Panc1 (cell line): ENCODE measurements at regions of chr1 and their contacts with region 1.

Region 1: DNA sequence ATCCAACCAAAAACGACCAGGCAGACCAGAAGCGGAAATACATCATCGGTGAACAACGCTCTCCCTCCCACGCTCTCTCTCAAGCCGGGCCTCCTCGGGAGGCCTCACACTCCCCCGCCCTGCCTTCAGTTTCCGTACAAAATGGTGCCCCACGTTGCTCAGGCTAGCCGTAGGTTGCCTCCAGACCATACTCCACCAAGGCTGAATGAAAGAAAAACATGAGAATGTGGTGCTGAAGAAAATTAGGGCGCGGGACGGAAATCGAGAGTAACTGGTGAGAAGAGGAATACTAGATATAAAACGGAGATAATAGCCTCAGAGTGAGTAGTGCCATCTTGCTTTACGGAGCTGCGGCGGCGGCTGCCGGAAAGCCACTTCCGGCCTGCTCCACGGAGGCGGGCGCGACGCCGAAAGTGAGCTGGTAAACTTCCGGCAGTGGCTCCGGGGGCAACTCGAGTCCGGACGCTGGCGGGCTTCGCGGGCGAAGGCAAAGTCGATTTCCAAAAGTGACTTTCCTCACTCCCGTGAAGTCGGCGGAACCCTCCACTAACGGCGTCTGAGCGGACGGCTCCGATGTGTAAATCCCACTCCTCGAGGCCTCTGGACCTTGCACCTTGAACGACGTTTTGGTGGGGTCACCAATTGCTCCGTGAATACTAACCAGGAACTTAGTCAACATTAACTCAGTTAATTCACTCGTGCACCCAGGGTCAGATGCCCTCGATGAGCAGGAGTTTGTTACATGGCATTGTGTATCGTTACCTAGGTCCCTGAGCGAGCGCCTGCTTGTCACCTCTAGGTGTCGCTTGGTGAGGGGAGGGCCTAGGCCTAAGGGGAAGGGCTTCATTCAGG is at the start of gene SH3BP5L:
- DNase-seq: peak; percentile 89
- ATAC-seq: peak; percentile 95
- H3K4me3 ChIP-seq: peak within 1 kb of the TSS; percentile 85 to 87
- H3K27ac ChIP-seq: peak within 1 kb of the TSS; percentile 99
- H3K4me1 ChIP-seq: peaks cover 15% of the 10 kb centered on the region
- H3K27me3 ChIP-seq: no peaks in the 10 kb centered on the region
- CTCF ChIP-seq: peak; percentile 90
- total RNA-seq, gene SH3BP5L: 23.9 TPM

Region 2: DNA sequence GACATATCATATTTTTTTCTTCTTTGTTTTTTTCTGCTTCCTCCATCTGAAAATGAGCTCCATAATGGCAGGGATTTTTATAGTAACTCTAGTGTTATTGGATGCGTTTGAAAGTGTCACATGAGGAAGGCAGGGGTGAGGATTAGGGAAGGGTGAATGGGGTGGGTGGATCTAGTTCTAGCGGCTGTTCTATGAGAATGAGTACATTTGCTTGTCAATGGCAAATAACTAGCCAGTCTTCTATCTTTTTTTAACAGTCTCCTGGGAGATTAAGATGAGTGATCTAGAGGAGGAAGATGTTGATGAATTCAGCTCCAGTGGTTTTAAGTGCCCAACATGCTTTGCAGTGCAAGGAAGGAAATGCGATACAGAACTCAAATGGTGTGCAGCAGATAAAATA is 129.4 kb before region 1 on chr1:
- CTCF ChIA-PET with region 1: interaction called, 18 read pairs
- POLR2A ChIA-PET with region 1: no interaction called
- in situ Hi-C with region 1: no loop called
- intact Hi-C with region 1: no loop called
- DNase-seq: no peak
- ATAC-seq: no peak
- H3K4me3 ChIP-seq: no peak overlapping the region
- H3K27ac ChIP-seq: no peak overlapping the region
- H3K4me1 ChIP-seq: no peaks in the 10 kb centered on the region
- H3K27me3 ChIP-seq: no peaks in the 10 kb centered on the region
- CTCF ChIP-seq: no peak

Region 3: DNA sequence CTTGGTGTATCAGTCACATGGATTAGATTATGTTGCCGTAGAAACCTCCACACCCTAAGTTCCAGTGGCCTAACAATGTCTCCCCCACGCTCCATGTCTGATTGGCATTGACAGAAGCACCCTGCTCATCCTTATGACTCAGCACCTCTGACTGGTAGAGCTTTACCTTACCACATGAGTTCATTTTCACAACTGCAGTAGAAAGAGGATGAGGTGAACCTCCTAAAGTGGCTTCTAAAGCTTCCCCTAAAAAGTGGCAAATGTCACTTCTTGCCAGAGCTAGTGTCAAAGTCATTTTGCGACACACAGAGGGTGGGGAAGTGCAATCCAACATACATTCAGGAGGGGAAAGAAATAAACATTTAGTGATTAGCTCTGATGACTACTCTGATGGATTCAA is 40.0 kb before region 1 on chr1:
- CTCF ChIA-PET with region 1: no interaction called
- POLR2A ChIA-PET with region 1: no interaction called
- in situ Hi-C with region 1: no loop called
- intact Hi-C with region 1: no loop called
- DNase-seq: no peak
- ATAC-seq: no peak
- H3K4me3 ChIP-seq: no peak overlapping the region
- H3K27ac ChIP-seq: no peak overlapping the region
- H3K4me1 ChIP-seq: no peaks in the 10 kb centered on the region
- H3K27me3 ChIP-seq: no peaks in the 10 kb centered on the region
- CTCF ChIP-seq: no peak

Region 4: GRCh38 chr1:248839160-248839540 is 13.0 kb after region 1 on chr1:
- CTCF ChIA-PET with region 1: interaction called, 3 read pairs
- POLR2A ChIA-PET with region 1: interaction called, 11 read pairs
- in situ Hi-C with region 1: no loop called
- intact Hi-C with region 1: no loop called
- DNase-seq: no peak
- ATAC-seq: no peak
- H3K4me3 ChIP-seq: peak overlapping the region; percentile 80 to 95
- H3K27ac ChIP-seq: peak overlapping the region; percentile 91
- H3K4me1 ChIP-seq: peaks cover 4% of the 10 kb centered on the region; the same call in 1 of the 2 replicates
- H3K27me3 ChIP-seq: peaks cover 2% of the 10 kb centered on the region; the same call in 1 of the 2 replicates
- CTCF ChIP-seq: no peak